IMR-90 (cell line): ENCODE measurements at regions of chr13 and their contacts with region 1.

Region 1: GRCh38 chr13:46160471-46161066 is 21.4 kb downstream of the LCP1 start:
- DNase-seq: peak; percentile 54
- ATAC-seq: peak; percentile 78
- H3K4me3 ChIP-seq: no peak overlapping the region
- H3K27ac ChIP-seq: no peak overlapping the region
- H3K4me1 ChIP-seq: no peaks in the 10 kb centered on the region
- H3K27me3 ChIP-seq: peaks cover 2% of the 10 kb centered on the region; the same call in 1 of the 2 replicates
- CTCF ChIP-seq: peak; percentile 75
- POLR2A ChIP-seq: no peak
- RAD21 ChIP-seq: peak; percentile 68

Region 2: GRCh38 chr13:45623515-45624090 is 537.0 kb before region 1 on chr13:
- CTCF ChIA-PET with region 1: interaction called, 3 read pairs
- POLR2A ChIA-PET with region 1: no interaction called
- dilution Hi-C with region 1: no loop called
- in situ Hi-C with region 1: no loop called
- intact Hi-C with region 1: loop called (anchors 1 kb)
- DNase-seq: peak; percentile 16
- ATAC-seq: peak; percentile 51
- H3K4me3 ChIP-seq: no peak overlapping the region
- H3K27ac ChIP-seq: no peak overlapping the region
- H3K4me1 ChIP-seq: no peaks in the 10 kb centered on the region
- H3K27me3 ChIP-seq: peaks cover 29% of the 10 kb centered on the region
- CTCF ChIP-seq: peak; percentile 50
- POLR2A ChIP-seq: no peak
- RAD21 ChIP-seq: peak; percentile 40

Region 3: DNA sequence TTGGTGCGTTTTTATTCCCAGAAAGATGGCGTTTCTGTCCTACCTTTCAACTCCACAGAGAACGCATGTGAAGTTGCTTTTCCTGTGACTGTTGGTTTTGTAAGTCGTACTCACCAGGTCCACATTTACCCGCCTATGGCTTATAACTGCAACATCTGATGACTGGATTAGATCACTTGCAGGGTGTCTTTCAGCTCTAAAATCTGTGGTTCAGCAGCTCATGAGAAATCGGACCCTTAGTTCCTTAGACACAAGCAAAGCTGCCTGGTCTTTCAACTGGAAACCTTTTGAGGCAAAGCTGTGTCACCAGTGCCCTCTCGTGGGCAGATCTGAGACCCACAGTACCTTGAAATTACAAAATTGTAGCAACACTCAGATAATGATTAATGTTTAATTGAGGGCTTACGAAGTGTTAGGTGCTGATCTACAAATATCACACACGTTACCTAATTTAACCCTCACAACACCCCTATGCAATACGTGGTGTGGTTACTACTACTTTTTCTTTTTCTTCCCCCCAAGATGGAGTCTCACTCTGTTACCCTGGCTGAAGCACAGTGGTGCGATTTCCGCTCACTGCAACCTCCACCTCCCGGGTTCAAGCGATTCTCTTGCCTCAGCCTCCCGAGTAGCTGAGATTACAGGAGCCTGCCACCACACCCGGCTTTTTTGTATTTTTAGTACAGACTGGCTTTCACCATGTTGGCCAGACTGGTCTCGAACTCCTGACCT is 161.1 kb after region 1 on chr13:
- CTCF ChIA-PET with region 1: no interaction called
- POLR2A ChIA-PET with region 1: no interaction called
- dilution Hi-C with region 1: no loop called
- in situ Hi-C with region 1: no loop called
- intact Hi-C with region 1: loop called (anchors 1 kb)
- DNase-seq: peak; percentile 44
- ATAC-seq: peak; percentile 84
- H3K4me3 ChIP-seq: no peak overlapping the region
- H3K27ac ChIP-seq: no peak overlapping the region
- H3K4me1 ChIP-seq: no peaks in the 10 kb centered on the region
- H3K27me3 ChIP-seq: peaks cover 6% of the 10 kb centered on the region; the same call in 1 of the 2 replicates
- CTCF ChIP-seq: peak; percentile 67
- POLR2A ChIP-seq: no peak
- RAD21 ChIP-seq: peak; percentile 74